Activated CD8-positive, alpha-beta memory T cell treated with anti-CD3 and anti-CD28 coated beads, Interleukin-2, amount 10 ng/mL, durations not matched to agents 7 days and 5 days (primary cell): ENCODE measurements at regions of chr12 and their contacts with region 1.

Region 1: GRCh38 chr12:31238764-31239387 is 87.1 kb downstream of the SINHCAF start:
- DNase-seq: peak; percentile 73
- ATAC-seq: peak; percentile 86
- H3K4me3 Mint-ChIP-seq: no peak overlapping the region
- H3K27ac Mint-ChIP-seq: no peak overlapping the region
- H3K4me1 Mint-ChIP-seq: peaks cover 13% of the 10 kb centered on the region
- H3K27me3 Mint-ChIP-seq: peaks cover 34% of the 10 kb centered on the region

Region 2: DNA sequence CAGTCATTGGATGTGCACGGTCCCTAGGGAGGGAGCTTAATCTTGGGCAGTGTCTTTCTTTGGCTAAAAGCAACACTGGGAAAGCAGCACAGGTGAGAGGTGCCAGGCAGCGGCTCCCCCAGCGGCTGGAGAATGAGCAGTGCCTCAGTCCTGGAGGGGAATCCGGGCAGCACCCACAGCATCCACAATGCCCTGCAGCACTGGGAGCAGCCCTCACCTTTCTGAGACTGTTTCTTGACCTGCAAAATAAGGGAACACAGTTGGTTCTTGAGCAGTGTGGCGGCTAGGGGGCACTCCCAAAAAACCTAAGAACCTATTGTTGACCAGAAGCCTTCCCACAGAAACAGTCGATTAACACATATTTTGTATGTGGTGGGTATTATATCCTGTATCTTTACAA is 11.3 kb after region 1 on chr12:
- CTCF ChIA-PET with region 1: interaction called, 14 read pairs
- DNase-seq: no peak
- ATAC-seq: no peak
- H3K4me3 Mint-ChIP-seq: no peak overlapping the region
- H3K27ac Mint-ChIP-seq: no peak overlapping the region
- H3K4me1 Mint-ChIP-seq: no peaks in the 10 kb centered on the region
- H3K27me3 Mint-ChIP-seq: peaks cover 18% of the 10 kb centered on the region